Right ventricle myocardium superior (tissue), 1 donor: ENCODE measurements at regions of chr6 and their contacts with region 1.

Region 1: DNA sequence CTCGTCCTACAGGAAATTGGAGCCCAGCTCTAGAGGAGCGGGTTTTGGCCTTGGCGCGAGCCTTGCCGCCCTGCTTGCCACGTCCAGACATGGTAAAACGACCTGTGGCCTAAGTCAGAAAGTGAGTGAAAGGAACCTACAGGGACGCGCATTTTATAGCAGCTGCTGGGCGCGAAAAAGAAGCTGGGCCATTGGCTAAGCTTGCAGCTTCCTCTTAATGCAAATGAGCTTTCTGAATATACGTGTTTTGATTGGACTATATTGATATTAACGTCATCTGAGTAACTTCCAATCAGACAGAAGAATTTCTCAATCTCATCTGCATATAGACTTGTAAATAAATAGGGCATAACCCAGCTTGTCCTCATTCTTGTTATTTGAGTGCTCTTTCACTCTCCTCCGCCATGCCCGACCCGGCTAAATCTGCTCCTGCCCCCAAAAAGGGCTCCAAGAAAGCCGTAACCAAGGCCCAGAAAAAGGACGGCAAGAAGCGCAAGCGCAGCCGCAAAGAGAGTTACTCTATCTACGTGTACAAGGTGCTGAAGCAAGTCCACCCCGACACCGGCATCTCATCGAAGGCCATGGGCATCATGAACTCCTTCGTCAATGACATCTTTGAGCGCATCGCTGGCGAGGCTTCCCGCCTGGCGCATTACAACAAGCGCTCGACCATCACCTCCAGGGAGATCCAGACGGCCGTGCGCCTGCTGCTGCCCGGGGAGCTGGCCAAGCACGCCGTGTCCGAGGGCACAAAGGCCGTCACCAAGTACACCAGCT is 18.9 kb downstream of the OR2B2 start:
- DNase-seq: peak; percentile 79
- ATAC-seq: peak; percentile 62

Region 2: GRCh38 chr6:27177485-27178406 is 715.5 kb before region 1 on chr6:
- intact Hi-C with region 1: loop called (anchors 5 kb)
- DNase-seq: peak; percentile 85
- ATAC-seq: peak; percentile 88

Region 3: DNA sequence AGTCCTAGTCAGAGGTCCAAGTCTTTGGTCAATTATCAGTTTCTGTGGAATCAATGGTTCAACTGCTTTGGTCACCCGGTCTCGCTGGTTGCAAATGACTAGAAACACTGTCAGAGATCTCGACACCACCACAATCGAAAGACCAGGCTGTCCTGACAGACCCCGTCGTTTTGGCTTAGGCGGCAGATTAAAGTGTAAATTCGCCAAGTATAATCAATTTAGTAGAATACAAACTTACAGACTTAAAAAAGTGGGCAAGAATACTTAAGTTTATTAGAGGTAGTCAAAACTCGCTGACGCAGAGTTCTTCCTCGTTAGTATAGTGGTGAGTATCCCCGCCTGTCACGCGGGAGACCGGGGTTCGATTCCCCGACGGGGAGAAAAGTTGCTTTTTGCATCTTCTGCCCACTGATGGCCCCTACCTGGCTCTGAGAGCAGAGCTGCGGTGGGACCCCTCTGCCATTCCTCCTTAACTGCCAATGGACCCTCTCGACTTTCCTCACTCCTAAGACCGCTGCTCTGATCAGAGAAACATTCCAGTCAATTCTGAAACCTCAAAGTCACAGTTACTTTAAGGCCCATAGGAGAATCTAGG is 389.7 kb before region 1 on chr6:
- intact Hi-C with region 1: loop called (anchors 10 kb)
- DNase-seq: peak; percentile 68
- ATAC-seq: peak; percentile 94

Region 4: GRCh38 chr6:27772261-27773001 is 120.8 kb before region 1 on chr6:
- intact Hi-C with region 1: loop called (anchors 5 kb)
- DNase-seq: peak; percentile 90
- ATAC-seq: peak; percentile 97